ENCODE measurements at regions of chr17 and their contacts with region 1.

Region 1: DNA sequence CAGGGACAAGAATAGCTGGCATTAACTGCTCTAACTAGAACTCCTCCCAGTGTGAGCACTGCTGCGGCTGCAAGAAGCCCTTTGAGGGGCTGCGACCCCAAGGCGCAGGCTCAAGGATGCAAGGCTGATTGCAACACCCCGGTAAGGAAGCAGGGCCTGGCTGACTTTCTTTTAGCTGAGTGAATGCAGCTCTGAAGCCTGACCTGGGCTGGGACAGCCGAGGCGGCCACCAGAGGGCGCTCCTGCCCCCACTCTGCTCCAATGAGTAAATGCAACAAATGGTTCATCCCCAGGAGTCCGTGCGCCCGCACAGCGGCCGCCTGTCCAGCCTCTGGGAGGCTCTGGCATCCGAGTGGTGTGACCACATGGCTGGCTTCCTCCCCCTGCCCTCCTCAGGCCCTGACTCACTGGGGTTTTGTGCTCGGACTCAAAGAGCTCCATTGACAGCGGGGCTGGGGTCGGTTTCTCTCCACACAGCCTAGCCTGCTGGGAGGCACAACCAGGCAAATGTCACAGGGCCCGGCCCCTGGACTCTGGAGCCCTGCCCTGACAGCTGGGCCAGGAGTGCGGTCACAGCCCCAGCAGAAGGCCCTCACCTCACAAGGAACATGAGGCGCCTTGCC is at the start of gene SMIM5:
- DNase-seq: peak; percentile 71 to 85
- H3K4me3 ChIP-seq: no peak within 1 kb of the TSS
- H3K27ac ChIP-seq: peak within 1 kb of the TSS; percentile 38; the same call in 1 of the 2 replicates
- H3K4me1 ChIP-seq: peaks cover 20% of the 10 kb centered on the region
- H3K27me3 ChIP-seq: no peaks in the 10 kb centered on the region
- CTCF ChIP-seq: peak; percentile 91
- total RNA-seq, gene SMIM5: 0.31 and 0.40 TPM in 2 replicates

Region 2: GRCh38 chr17:75524953-75525719 is 107.8 kb before region 1 on chr17 and contains the start of gene LLGL2:
- CTCF ChIA-PET with region 1: interaction called, 12 read pairs
- POLR2A ChIA-PET with region 1: no interaction called
- intact Hi-C with region 1: loop called (anchors 1 kb)
- DNase-seq: peak; percentile 77 to 95
- H3K4me3 ChIP-seq: peak within 1 kb of the TSS; percentile 100
- H3K27ac ChIP-seq: peak within 1 kb of the TSS; percentile 55
- H3K4me1 ChIP-seq: peaks cover 21% of the 10 kb centered on the region
- H3K27me3 ChIP-seq: no peaks in the 10 kb centered on the region
- CTCF ChIP-seq: peak; percentile 60
- total RNA-seq, gene LLGL2: 138 and 156 TPM in 2 replicates

Region 3: GRCh38 chr17:75619506-75620431 is 13.2 kb before region 1 on chr17:
- CTCF ChIA-PET with region 1: interaction called, 13 read pairs
- POLR2A ChIA-PET with region 1: no interaction called
- intact Hi-C with region 1: no loop called
- DNase-seq: no peak
- H3K4me3 ChIP-seq: no peak overlapping the region
- H3K27ac ChIP-seq: no peak overlapping the region
- H3K4me1 ChIP-seq: no peaks in the 10 kb centered on the region
- H3K27me3 ChIP-seq: no peaks in the 10 kb centered on the region
- CTCF ChIP-seq: peak; percentile 70

Region 4: DNA sequence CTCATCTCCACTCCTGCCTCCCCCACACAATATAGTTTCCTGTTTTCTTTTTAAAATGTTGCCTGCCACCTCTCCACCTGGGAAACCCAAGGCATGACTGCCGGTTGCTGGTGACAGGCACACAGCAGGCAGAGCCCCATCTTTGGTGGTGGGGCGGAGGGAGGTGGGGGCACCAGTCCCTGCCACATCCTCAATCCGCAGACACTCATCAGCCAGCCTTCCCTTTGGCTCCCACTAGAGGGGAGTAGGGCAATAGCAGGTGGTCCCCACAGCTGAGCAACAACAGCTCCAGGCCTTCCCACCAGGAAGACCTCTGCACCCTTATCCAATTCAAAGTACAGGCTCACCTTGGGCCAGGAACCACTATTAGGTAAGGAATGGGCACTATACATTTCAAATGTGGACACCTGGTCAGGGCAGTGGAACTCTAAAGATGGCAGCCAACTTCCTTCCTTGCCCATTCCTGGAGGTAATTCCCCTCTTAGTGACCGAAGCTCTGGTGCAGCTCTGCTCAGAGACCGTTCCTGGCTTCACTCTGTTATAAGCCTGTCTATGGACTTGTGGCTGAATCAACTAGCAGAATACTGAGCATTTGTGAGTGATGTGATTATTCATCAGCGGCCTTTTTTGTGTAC is 20.1 kb after region 1 on chr17:
- CTCF ChIA-PET with region 1: interaction called, 40 read pairs
- POLR2A ChIA-PET with region 1: interaction called, 3 read pairs
- intact Hi-C with region 1: loop called (anchors 1 kb)
- DNase-seq: peak in 1 of 2 experiments; percentile 37
- H3K4me3 ChIP-seq: no peak overlapping the region
- H3K27ac ChIP-seq: no peak overlapping the region
- H3K4me1 ChIP-seq: no peaks in the 10 kb centered on the region
- H3K27me3 ChIP-seq: no peaks in the 10 kb centered on the region
- CTCF ChIP-seq: peak; percentile 72

Region 5: DNA sequence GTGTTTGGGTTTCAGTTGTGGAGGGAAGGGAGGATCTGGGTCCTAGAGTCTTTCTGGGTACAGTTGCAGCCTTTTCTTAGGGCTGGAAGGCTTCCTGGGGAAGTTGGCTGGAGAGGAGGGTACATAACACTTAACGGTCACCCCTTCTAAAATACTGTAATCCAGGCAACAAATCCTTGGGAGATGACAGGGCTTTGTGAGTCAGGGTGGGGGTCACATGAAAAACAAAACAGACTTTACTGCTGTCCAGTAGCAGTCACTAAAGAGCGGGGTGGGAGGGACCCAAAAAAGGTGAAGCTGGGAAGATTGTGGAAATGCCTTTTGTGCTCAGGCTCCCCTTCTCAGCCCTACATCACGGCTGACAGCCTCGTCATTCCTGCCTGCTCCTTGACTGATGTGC is 40.5 kb after region 1 on chr17:
- CTCF ChIA-PET with region 1: interaction called, 14 read pairs
- POLR2A ChIA-PET with region 1: no interaction called
- intact Hi-C with region 1: loop called (anchors 5 kb)
- DNase-seq: no peak
- H3K4me3 ChIP-seq: no peak overlapping the region
- H3K27ac ChIP-seq: no peak overlapping the region
- H3K4me1 ChIP-seq: peaks cover 11% of the 10 kb centered on the region
- H3K27me3 ChIP-seq: no peaks in the 10 kb centered on the region
- CTCF ChIP-seq: no peak

Measured in PC-9 (cell line).